ENCODE measurements at regions of chr17 and their contacts with region 1.

Region 1: GRCh38 chr17:82320956-82321927 is 3.8 kb upstream of the CD7 start:
- DNase-seq: no peak
- H3K4me3 ChIP-seq: peak overlapping the region in 1 of 3 experiments; percentile 21
- H3K27ac ChIP-seq: no peak overlapping the region
- H3K4me1 ChIP-seq: peaks cover 16% of the 10 kb centered on the region
- H3K27me3 ChIP-seq: no peaks in the 10 kb centered on the region
- CTCF ChIP-seq: peak; percentile 42 to 73

Region 2: DNA sequence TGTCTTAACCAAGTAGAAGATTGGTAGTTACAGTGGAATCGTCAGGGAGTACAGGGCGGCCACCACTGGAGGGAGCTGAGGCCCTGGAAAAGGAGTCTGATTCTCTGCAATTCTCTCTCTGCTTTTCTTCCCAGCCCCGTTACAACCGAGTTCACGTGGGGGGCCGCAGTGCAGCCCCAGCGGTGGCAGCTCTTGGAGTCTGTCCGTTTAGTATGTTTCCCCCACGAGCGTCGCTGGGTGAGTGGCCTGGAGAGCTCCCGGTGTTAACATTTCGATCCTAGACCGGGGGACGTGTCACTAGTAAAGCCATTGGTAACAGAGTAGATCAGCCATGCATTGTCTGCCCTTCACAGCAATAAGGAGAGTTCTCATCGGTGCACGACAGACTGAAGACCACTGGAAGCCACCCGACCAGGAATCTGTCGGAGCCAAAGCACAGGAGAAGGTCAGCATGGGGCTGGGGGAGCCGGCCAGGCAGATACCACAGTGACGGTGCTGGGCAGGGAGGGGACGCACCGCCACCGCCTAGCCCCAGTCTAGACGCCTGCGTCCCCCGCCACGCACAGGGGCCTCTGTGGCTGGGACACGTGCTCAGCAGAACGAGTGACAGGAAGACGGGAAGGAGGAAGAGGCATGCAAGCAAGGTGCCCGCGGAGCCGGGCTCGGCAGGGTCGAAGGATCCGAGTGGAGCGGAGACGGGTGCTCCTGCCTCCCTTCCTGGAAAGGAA is 76.7 kb before region 1 on chr17:
- CTCF ChIA-PET with region 1: no interaction called
- dilution Hi-C with region 1: no loop called
- in situ Hi-C with region 1: no loop called
- intact Hi-C with region 1: loop called (anchors 1 kb)
- DNase-seq: no peak
- H3K4me3 ChIP-seq: no peak overlapping the region
- H3K27ac ChIP-seq: no peak overlapping the region
- H3K4me1 ChIP-seq: peaks cover 67% of the 10 kb centered on the region
- H3K27me3 ChIP-seq: no peaks in the 10 kb centered on the region
- CTCF ChIP-seq: peak; percentile 44 to 60

Measured in mammary epithelial cell (primary cell).